ENCODE measurements at regions of chr21 and their contacts with region 1.

Region 1: DNA sequence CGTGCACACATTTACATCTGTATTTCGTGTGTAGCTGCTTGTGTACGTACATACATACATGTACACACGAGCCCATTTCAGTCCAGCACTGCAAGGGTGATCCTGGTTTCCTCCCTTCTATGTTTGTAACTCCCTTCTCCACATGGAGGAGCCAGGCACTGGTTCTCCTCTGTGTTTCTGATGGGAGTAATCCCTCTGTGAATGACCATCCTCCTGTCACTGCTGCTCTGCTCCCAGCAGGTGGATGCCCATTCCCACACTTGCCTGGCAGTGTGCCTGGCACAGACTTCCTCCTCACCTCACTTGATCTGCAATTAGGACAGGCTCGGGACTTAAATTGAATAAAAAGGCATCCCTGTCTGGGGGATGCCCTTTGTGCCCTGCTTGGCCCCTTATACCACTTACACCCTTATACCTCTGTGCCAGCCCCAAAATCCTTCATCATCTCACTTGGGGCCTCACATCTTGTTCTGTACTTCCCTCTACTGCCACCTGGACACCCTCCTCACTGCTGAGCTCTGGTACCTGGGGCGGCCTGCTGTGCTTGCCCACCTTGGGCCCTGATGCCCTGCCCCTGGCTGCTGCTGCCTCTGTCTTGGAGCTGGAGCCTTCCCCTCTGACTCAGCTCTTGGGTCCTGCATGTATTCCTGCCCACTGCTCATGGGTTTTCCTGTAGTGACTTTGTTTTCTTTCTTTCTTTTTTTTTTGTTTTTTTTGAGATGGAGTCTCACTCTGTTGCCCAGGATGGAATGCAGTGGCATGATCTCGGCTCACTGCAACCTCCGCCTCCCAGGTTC is 37.3 kb downstream of the TRAPPC10 start:
- DNase-seq: no peak
- ATAC-seq: no peak
- H3K4me3 Mint-ChIP-seq: no peak overlapping the region
- H3K27ac Mint-ChIP-seq: no peak overlapping the region
- H3K4me1 Mint-ChIP-seq: peaks cover 16% of the 10 kb centered on the region
- H3K27me3 Mint-ChIP-seq: no peaks in the 10 kb centered on the region
- CTCF ChIP-seq: no peak

Region 2: DNA sequence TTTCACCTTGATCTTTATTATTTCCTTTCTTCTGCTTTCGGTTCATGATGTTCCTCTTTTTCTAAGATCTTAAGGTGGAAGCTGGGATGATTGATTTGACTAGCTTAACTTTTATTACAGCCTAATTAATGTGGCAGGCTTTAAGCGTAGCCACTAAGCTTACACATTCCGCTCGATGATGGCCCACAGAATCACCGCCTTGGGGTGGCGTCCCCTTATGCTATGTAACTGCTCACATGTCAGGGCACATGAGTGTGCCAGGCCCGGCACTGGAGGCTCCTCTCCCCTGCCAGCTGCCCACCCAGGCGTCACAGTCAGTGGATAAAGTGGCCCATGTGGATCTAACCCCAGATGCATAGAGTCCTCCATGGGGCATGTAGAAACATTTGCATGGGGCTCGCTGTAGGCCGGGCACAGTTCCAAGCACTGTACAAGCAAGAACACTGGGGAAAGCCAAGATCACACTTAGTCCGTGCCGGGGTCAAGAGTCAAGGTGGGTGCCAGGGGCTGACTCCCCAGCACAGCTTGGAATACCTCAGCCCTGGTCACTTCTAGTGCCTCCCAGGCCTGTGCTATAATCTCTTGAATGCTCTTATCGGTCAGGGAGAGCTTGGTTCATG is 1033.3 kb before region 1 on chr21:
- CTCF ChIA-PET with region 1: no interaction called
- POLR2A ChIA-PET with region 1: no interaction called
- intact Hi-C with region 1: no loop called
- DNase-seq: no peak
- ATAC-seq: peak; percentile 50
- H3K4me3 Mint-ChIP-seq: peak overlapping the region; percentile 46
- H3K27ac Mint-ChIP-seq: peak overlapping the region; percentile 59
- H3K4me1 Mint-ChIP-seq: peaks cover 46% of the 10 kb centered on the region
- H3K27me3 Mint-ChIP-seq: no peaks in the 10 kb centered on the region
- CTCF ChIP-seq: no peak

Region 3: GRCh38 chr21:43975495-43975993 is 73.8 kb before region 1 on chr21:
- CTCF ChIA-PET with region 1: no interaction called
- POLR2A ChIA-PET with region 1: no interaction called
- intact Hi-C with region 1: no loop called
- DNase-seq: peak; percentile 76
- ATAC-seq: peak; percentile 98
- H3K4me3 Mint-ChIP-seq: no peak overlapping the region
- H3K27ac Mint-ChIP-seq: no peak overlapping the region
- H3K4me1 Mint-ChIP-seq: peaks cover 9% of the 10 kb centered on the region
- H3K27me3 Mint-ChIP-seq: no peaks in the 10 kb centered on the region
- CTCF ChIP-seq: peak; percentile 54

Region 4: GRCh38 chr21:44067011-44067839 is 17.8 kb after region 1 on chr21:
- CTCF ChIA-PET with region 1: no interaction called
- POLR2A ChIA-PET with region 1: no interaction called
- intact Hi-C with region 1: loop called (anchors 2 kb)
- DNase-seq: no peak
- ATAC-seq: no peak
- H3K4me3 Mint-ChIP-seq: no peak overlapping the region
- H3K27ac Mint-ChIP-seq: no peak overlapping the region
- H3K4me1 Mint-ChIP-seq: peaks cover 13% of the 10 kb centered on the region
- H3K27me3 Mint-ChIP-seq: no peaks in the 10 kb centered on the region
- CTCF ChIP-seq: no peak

Measured in activated B cell treated with CpG ODN at 0.5 μM for 24 hours (primary cell).